A549 (cell line): ENCODE measurements at regions of chr7 and their contacts with region 1.

Region 1: DNA sequence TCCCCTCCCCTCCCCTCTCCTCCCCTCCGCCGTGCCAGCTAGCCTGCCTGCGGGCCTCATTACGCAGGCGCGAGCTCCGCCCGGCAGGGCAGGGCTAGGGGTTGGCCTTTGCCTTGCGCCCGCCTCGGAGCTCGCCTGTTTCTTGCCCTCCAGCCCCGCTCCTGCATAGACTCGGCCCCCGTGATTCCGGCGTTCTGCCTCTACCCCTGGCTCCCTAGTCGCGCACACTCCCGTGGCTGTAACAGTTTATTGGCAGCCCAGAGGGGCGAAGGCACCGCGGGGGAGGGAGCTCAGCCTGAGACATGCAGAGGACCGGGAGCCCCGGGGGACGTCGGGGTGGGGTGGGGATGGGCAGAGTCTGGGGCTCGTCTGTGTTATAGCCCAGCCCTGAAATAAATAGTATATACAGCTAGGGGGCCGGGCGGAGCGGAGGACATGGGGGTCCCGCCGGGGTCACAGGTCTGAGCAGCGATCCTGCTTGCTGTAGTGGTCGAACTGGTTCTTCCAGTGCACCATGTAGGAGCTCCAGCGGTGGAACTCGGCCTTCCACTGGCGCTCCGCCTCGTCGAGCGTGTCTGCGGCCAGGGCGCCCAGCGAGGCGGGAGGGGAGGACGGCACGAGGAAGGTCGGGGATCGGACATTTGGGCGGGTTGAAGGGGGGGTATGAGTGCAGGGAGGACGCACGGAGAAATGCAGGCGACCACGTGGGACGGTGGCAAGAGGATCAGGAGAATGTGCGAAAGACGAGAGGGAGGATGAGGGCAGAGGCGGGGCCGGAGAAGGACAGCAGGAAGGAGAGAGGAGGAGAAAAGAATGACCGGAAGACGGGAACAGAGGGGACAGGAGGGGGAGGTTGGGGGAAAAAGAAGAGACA is 483 bp upstream of the UFSP1 start:
- DNase-seq: peak; percentile 93 to 96
- ATAC-seq: peak; percentile 68 to 91
- H3K4me3 ChIP-seq: peak overlapping the region; percentile 92
- H3K27ac ChIP-seq: peak overlapping the region; percentile 86 to 95
- H3K4me1 ChIP-seq: peaks cover 34% of the 10 kb centered on the region
- CTCF ChIP-seq: no peak
- EP300 ChIP-seq: no peak
- POLR2A ChIP-seq: peak; percentile 74
- RAD21 ChIP-seq: no peak

Region 2: GRCh38 chr7:100604976-100605911 is 284.8 kb before region 1 on chr7:
- CTCF ChIA-PET with region 1: no interaction called
- POLR2A ChIA-PET with region 1: no interaction called
- DNase-seq: peak; percentile 48 to 74
- ATAC-seq: peak; percentile 57 to 71
- H3K4me3 ChIP-seq: peak overlapping the region; percentile 74
- H3K27ac ChIP-seq: peak overlapping the region; percentile 84 to 86
- H3K4me1 ChIP-seq: 0 out of 3 replicates have a peak, but pooled peaks cover 8% of the 10 kb centered on the region
- CTCF ChIP-seq: no peak
- EP300 ChIP-seq: no peak
- POLR2A ChIP-seq: 0 out of 2 replicates have a peak, but pooled peaks have one; percentile 12
- RAD21 ChIP-seq: no peak

Region 3: GRCh38 chr7:100773491-100773890 is 116.5 kb before region 1 on chr7:
- CTCF ChIA-PET with region 1: no interaction called
- POLR2A ChIA-PET with region 1: no interaction called
- DNase-seq: no peak
- ATAC-seq: no peak
- H3K4me3 ChIP-seq: no peak overlapping the region
- H3K27ac ChIP-seq: no peak overlapping the region
- H3K4me1 ChIP-seq: no peaks in the 10 kb centered on the region
- CTCF ChIP-seq: no peak
- EP300 ChIP-seq: no peak
- POLR2A ChIP-seq: no peak
- RAD21 ChIP-seq: no peak

Region 4: GRCh38 chr7:100874577-100875355 is 15.2 kb before region 1 on chr7 and contains the start of gene SRRT:
- CTCF ChIA-PET with region 1: interaction called, 5 read pairs
- POLR2A ChIA-PET with region 1: interaction called, 106 read pairs
- DNase-seq: peak; percentile 95 to 99
- ATAC-seq: peak; percentile 92 to 97
- H3K4me3 ChIP-seq: peak within 1 kb of the TSS; percentile 98
- H3K27ac ChIP-seq: peak within 1 kb of the TSS; percentile 95 to 96
- H3K4me1 ChIP-seq: peaks cover 9% of the 10 kb centered on the region
- CTCF ChIP-seq: no peak
- EP300 ChIP-seq: no peak
- POLR2A ChIP-seq: peak; percentile 82
- RAD21 ChIP-seq: no peak
- polyA plus RNA-seq, gene SRRT: 49.9 and 52.2 TPM in 2 replicates

Region 5: DNA sequence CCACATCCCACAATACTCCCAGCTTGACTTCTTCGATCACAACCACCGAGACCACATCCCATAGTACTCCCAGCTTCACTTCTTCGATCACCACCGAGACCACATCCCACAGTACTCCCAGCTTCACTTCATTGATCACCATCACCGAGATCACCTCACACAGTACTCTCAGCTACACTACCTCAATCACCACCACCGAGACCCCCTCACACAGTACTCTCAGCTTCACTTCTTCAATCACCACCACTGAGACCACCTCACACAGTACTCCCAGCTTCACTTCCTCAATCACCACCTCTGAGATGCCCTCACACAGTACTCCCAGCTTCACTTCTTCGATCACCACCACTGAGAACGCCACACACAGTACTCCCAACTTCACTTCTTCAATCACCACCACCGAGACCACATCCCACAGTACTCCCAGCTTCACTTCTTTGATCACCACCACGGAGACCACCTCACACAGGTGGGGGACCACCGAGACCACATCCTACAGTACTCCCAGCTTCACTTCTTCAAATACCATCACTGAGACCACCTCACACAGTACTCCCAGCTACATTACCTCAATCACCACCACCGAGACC is 67.9 kb after region 1 on chr7:
- CTCF ChIA-PET with region 1: interaction called, 10 read pairs
- POLR2A ChIA-PET with region 1: no interaction called
- DNase-seq: peak in 1 of 2 experiments; percentile 35
- ATAC-seq: peak in 1 of 2 experiments; percentile 48; a peak in 3 of 6 replicates
- H3K4me3 ChIP-seq: no peak overlapping the region
- H3K27ac ChIP-seq: no peak overlapping the region
- H3K4me1 ChIP-seq: no peaks in the 10 kb centered on the region
- CTCF ChIP-seq: no peak
- EP300 ChIP-seq: no peak
- POLR2A ChIP-seq: 0 out of 2 replicates have a peak, but pooled peaks have one; percentile 9
- RAD21 ChIP-seq: no peak

Region 6: GRCh38 chr7:101077303-101078089 is 187.5 kb after region 1 on chr7:
- CTCF ChIA-PET with region 1: interaction called, 71 read pairs
- POLR2A ChIA-PET with region 1: no interaction called
- DNase-seq: peak; percentile 78 to 85
- ATAC-seq: peak; percentile 99 to 100
- H3K4me3 ChIP-seq: no peak overlapping the region
- H3K27ac ChIP-seq: 0 out of 6 replicates have a peak overlapping the region, but pooled peaks of 1 of the 2 experiments have one; percentile 12
- H3K4me1 ChIP-seq: no peaks in the 10 kb centered on the region
- CTCF ChIP-seq: peak; percentile 91
- EP300 ChIP-seq: no peak
- POLR2A ChIP-seq: no peak
- RAD21 ChIP-seq: peak; percentile 89 to 96

Region 7: DNA sequence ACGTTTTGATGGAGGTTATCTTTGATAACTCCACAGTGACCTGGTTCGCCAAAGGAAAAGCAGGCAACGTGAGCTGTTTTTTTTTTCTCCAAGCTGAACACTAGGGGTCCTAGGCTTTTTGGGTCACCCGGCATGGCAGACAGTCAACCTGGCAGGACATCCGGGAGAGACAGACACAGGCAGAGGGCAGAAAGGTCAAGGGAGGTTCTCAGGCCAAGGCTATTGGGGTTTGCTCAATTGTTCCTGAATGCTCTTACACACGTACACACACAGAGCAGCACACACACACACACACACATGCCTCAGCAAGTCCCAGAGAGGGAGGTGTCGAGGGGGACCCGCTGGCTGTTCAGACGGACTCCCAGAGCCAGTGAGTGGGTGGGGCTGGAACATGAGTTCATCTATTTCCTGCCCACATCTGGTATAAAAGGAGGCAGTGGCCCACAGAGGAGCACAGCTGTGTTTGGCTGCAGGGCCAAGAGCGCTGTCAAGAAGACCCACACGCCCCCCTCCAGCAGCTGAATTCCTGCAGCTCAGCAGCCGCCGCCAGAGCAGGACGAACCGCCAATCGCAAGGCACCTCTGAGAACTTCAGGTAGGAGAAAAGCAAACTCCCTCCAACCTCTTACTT is 236.8 kb after region 1 on chr7 and contains the start of gene SERPINE1:
- CTCF ChIA-PET with region 1: interaction called, 7 read pairs
- POLR2A ChIA-PET with region 1: interaction called, 10 read pairs
- DNase-seq: peak; percentile 98
- ATAC-seq: peak; percentile 73 to 78
- H3K4me3 ChIP-seq: peak within 1 kb of the TSS; percentile 63
- H3K27ac ChIP-seq: peak within 1 kb of the TSS; percentile 94 to 95
- H3K4me1 ChIP-seq: peaks cover 78% of the 10 kb centered on the region
- CTCF ChIP-seq: peak; percentile 29; the same call in 2 of the 3 replicates
- EP300 ChIP-seq: 0 out of 5 replicates have a peak, but pooled peaks of 1 of the 2 experiments have one; percentile 10
- POLR2A ChIP-seq: peak; percentile 98
- RAD21 ChIP-seq: peak in 1 of 2 experiments; percentile 8; a peak in 2 of 5 replicates
- polyA plus RNA-seq, gene SERPINE1: 300 and 355 TPM in 2 replicates